Right ventricle myocardium inferior (tissue), 1 donor: ENCODE measurements at regions of chr4 and their contacts with region 1.

Region 1: DNA sequence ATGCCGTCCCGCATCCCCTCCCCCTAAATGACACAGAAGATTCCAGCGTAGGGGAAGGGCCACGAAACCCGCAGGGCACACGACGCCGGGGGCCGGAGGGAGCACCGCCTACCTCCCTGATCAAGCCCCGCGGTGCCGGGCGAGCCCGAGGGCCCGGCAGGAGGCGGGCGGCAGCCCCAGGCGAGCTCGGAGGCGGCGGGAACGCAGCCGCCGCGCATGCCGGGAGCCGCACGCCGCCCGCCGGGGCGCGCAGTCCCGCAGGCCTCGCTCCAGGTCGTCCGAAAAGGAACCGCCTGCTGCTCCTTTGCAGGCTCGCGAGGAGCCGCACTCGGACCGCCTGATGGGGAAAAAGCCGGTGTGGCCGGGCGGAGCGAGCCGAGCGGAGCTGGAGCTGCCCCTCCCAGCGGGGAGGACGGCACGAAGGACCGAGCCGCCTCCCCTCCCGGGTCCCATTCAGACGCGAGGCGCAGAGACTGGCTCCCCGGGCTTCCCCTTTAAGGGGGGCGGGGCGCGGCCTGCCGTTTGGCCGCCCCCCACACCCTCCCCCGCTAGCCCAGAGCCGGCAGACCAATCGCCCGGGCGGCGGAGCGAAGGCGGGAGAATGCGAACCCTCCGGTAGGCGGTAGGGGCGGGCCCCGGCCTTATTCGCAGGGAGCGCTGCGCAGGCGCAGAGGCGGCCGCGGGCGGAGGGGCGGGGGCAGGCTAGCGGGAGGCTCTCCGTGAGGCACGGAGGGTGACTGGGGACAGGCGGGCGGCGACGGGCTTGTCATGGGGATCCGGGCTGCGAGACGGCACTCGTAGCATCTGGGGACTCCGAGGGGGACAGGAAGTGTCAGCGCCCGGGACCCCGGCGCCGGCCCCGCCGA is 561 bp upstream of the ING2 start:
- DNase-seq: peak; percentile 100
- ATAC-seq: peak; percentile 98

Region 2: GRCh38 chr4:182969651-182970269 is 534.5 kb before region 1 on chr4:
- intact Hi-C with region 1: no loop called
- DNase-seq: no peak
- ATAC-seq: no peak

Region 3: DNA sequence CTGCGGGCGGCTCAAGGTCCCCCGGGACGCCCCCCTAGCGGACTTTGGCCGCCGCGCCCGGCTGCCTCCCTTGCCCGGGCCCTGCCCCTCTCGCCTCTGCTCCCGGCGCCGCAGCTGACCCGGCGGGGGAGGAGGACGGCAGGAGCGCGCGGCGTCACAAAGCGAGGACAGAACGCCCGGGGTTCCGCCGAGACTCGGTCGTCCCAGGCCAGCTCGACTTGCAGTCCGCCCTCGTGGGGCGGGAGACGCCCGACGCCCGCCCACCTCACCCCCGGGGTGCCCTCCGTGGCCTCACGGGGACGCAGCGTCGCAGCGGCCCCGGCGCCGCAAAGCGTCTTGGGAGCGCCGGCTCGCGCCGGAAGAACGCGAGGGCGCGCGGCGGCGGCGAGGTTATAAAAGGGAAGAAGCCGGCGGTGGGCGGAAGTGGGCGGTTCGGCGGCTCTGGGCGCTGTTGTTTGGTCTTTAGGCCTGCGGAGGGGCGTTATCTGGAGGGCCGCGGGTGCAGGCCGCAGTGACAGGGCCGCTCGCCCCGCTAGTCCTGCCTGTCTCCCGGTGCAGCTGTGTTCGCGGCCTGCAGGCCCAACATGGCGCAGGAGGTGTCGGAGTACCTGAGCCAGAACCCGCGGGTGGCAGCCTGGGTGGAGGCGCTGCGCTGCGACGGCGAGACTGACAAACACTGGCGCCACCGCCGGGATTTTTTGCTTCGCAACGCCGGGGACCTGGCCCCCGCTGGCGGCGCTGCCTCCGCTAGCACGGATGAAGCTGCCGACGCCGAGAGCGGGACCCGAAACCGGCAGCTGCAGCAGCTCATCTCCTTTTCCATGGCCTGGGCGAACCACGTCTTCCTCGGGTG is 59.9 kb before region 1 on chr4 and contains the start of gene CDKN2AIP:
- intact Hi-C with region 1: loop called (anchors 2 kb)
- DNase-seq: peak; percentile 98
- ATAC-seq: peak; percentile 96
- total RNA-seq, gene CDKN2AIP: 10.6 TPM

Region 4: GRCh38 chr4:183659029-183659871 is 155.0 kb after region 1 on chr4 and contains the starts of genes RWDD4 and TRAPPC11:
- intact Hi-C with region 1: loop called (anchors 2 kb)
- DNase-seq: peak; percentile 98
- ATAC-seq: peak; percentile 100
- total RNA-seq, gene RWDD4: 15.5 TPM
- total RNA-seq, gene TRAPPC11: 17.8 TPM

Region 5: DNA sequence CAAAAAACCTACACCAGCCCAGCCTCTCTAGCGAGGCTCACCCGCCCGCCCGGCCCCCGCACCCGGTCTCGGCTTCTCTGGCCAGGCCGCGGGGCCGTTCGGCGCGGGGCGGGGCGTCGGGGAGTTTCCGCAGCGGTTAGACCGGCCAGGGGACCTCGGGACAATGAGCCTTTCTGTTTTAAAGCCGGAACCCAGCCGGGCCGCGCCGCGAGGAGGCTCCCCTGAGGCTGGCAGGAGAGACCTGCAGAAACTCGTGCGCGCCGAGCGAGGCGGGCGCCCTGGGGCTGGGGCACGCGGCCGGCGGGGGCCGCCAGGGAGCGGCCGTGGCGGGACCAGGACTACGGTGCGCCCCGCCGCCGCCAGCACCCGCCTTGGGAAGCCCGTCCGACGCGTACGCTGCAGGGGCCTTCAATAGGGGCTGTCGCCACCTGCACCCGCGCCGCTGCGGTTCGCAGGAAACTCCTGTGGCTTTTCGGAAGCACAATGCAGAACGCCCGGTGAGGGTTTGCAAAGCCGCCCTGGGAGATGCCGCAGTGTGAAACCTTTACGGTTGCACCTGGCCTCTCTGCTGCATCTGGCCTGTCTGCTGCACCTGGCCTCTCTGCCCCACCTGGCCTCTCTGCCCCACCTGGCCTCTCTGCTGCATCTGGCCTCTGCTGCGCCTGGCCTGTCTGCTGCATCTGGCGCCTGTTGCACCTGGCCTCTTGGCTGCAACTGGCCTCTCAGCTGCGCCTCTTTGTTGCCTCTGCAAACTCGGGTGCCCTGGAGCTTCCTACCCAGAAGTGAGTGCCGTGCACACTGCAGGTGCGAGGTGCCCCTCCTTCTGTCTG is 218.6 kb after region 1 on chr4:
- intact Hi-C with region 1: loop called (anchors 5 kb)
- DNase-seq: peak; percentile 76
- ATAC-seq: peak; percentile 71